CD8-positive, alpha-beta T cell (primary cell): ENCODE measurements at regions of chr1 and their contacts with region 1.

Region 1: DNA sequence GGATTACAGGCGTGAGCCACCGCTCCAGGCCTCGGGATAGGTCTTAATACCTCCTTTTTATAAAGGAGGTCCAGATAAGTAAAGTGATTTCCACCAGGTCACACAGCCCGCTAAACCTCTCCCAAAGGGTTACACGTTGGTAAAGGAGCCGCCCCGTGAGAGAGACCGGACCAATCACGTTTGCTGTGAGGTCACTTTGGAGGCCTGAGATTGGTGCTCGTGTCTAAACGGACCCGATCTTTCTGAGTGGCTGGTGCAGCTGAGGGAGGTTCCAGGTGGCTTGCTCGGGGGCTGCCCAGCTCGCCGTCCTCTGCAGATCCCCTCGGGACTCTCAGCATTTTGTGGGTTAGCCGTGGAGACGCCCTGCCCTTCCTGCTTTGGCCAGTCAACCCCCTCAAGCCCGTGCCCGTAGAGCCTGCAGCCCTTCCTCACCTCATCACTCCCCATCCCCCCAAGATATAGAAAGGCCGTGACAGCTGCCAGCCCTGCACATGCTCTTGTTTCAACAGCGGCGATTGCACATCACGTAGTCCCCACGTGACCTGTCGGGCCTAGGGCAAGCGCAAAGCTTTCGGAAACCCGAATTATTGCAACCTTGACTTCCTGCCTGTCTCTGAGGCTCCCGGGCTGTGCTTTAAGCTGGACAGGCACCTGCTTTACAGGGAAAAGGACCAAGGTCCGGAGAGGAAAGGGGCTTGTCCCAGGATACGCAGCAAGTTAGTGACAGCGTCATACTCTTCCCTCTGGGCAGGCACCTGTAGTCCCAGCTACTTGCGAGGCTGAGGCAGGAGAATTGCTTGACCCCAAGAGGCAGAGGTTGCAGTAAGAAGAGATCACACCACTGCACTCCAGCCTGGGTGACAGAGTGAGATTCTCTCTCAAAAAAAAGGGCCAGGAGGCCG is 5.0 kb upstream of the COA7 start:
- DNase-seq: peak; percentile 61 to 92 (median 78)
- ATAC-seq: peak; percentile 93
- H3K4me3 ChIP-seq: peak overlapping the region; percentile 54 to 59
- H3K4me3 Mint-ChIP-seq: peak overlapping the region; percentile 89
- H3K27ac ChIP-seq: peak overlapping the region; percentile 80 to 87
- H3K27ac Mint-ChIP-seq: peak overlapping the region; percentile 98
- H3K4me1 ChIP-seq: peaks cover 11% of the 10 kb centered on the region
- H3K4me1 Mint-ChIP-seq: peaks cover 19% of the 10 kb centered on the region
- H3K27me3 ChIP-seq: no peaks in the 10 kb centered on the region
- H3K27me3 Mint-ChIP-seq: peaks cover under 1% of the 10 kb centered on the region
- CTCF ChIP-seq: no peak

Region 2: GRCh38 chr1:52404116-52404986 is 298.8 kb before region 1 on chr1 and contains the starts of genes ORC1 and PRPF38A:
- CTCF ChIA-PET with region 1: interaction called, 3 read pairs
- POLR2A ChIA-PET with region 1: interaction called, 6 read pairs
- intact Hi-C with region 1: loop called in 1 of 2 experiments (anchors 5 kb)
- DNase-seq: peak; percentile 94 to 99 (median 98)
- ATAC-seq: peak; percentile 92
- H3K4me3 ChIP-seq: peak within 1 kb of the TSS; percentile 87 to 92
- H3K4me3 Mint-ChIP-seq: peak within 1 kb of the TSS; percentile 99
- H3K27ac ChIP-seq: peak within 1 kb of the TSS; percentile 96
- H3K27ac Mint-ChIP-seq: peak within 1 kb of the TSS; percentile 98
- H3K4me1 ChIP-seq: peaks cover 26% of the 10 kb centered on the region
- H3K4me1 Mint-ChIP-seq: peaks cover 42% of the 10 kb centered on the region
- H3K27me3 ChIP-seq: no peaks in the 10 kb centered on the region
- H3K27me3 Mint-ChIP-seq: no peaks in the 10 kb centered on the region
- CTCF ChIP-seq: no peak
- total RNA-seq, gene ORC1: 1.2 to 1.3 TPM
- total RNA-seq, gene PRPF38A: 52.2 to 62.0 TPM

Region 3: GRCh38 chr1:52691821-52692220 is 11.3 kb before region 1 on chr1:
- CTCF ChIA-PET with region 1: interaction called, 3 read pairs
- POLR2A ChIA-PET with region 1: interaction called, 3 read pairs
- intact Hi-C with region 1: loop called in 1 of 2 experiments (anchors 1 kb)
- DNase-seq: no peak
- ATAC-seq: no peak
- H3K4me3 ChIP-seq: no peak overlapping the region
- H3K4me3 Mint-ChIP-seq: no peak overlapping the region
- H3K27ac ChIP-seq: no peak overlapping the region
- H3K27ac Mint-ChIP-seq: no peak overlapping the region
- H3K4me1 ChIP-seq: no peaks in the 10 kb centered on the region
- H3K4me1 Mint-ChIP-seq: peaks cover 3% of the 10 kb centered on the region
- H3K27me3 ChIP-seq: no peaks in the 10 kb centered on the region
- H3K27me3 Mint-ChIP-seq: no peaks in the 10 kb centered on the region
- CTCF ChIP-seq: no peak

Region 4: DNA sequence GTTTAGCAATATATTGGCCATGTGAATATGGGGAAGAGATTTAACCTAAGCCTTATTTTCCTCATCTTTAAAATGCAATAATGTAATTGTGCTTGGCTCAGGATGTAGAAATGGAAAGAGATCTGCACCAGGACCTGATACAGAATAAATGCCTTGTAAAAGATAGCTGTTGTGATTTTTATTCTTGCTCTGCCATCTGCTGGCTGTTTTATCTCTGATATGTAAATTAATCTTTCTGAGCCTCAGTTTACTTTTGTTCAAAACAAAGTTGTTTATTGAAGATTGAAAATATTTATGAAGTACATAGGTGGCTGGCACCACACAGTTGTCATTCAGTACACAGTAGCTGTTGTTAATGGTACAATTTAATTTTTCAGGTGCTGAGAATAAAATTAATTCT is 45.0 kb after region 1 on chr1:
- CTCF ChIA-PET with region 1: interaction called, 4 read pairs
- POLR2A ChIA-PET with region 1: no interaction called
- intact Hi-C with region 1: loop called in 1 of 2 experiments (anchors 1 kb)
- DNase-seq: peak in 2 of 9 experiments; percentile 12 to 24
- ATAC-seq: no peak
- H3K4me3 ChIP-seq: no peak overlapping the region
- H3K4me3 Mint-ChIP-seq: no peak overlapping the region
- H3K27ac ChIP-seq: no peak overlapping the region
- H3K27ac Mint-ChIP-seq: no peak overlapping the region
- H3K4me1 ChIP-seq: no peaks in the 10 kb centered on the region
- H3K4me1 Mint-ChIP-seq: peaks cover 33% of the 10 kb centered on the region
- H3K27me3 ChIP-seq: no peaks in the 10 kb centered on the region
- H3K27me3 Mint-ChIP-seq: no peaks in the 10 kb centered on the region
- CTCF ChIP-seq: no peak

Region 5: DNA sequence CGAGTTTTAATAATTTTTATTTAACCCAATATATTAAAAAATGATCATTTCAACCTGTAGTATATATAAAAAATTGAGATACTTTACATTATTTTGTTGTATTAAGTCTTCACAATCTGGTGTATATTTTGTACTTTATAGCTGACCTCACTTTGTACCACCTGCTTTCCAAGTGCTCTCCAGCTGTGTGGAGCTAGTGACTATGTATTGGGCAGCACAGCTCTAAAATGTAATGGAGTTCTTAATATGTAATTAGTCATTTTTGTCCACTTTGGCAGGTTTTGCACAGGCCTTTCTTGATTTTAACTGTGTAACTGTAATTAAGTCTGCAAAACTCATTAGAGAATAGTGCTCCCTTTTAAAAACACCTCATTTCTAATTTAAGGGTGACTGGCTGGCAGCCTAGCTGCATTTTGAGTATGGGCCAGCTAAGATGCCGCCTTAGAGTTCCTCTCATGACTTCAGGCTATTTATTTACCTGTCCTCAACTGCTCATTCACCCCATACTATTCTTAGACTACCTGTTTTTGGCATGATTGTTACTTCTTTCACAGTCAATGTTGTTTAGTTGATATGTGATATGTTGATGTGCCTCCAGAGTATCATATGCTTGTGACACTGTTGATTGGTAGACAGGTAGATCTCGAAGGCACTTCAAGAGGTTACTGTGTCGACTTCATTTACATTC is 66.4 kb after region 1 on chr1:
- CTCF ChIA-PET with region 1: no interaction called
- POLR2A ChIA-PET with region 1: no interaction called
- intact Hi-C with region 1: no loop called
- DNase-seq: no peak
- ATAC-seq: no peak
- H3K4me3 ChIP-seq: no peak overlapping the region
- H3K4me3 Mint-ChIP-seq: no peak overlapping the region
- H3K27ac ChIP-seq: no peak overlapping the region
- H3K27ac Mint-ChIP-seq: no peak overlapping the region
- H3K4me1 ChIP-seq: no peaks in the 10 kb centered on the region
- H3K4me1 Mint-ChIP-seq: peaks cover 22% of the 10 kb centered on the region
- H3K27me3 ChIP-seq: no peaks in the 10 kb centered on the region
- H3K27me3 Mint-ChIP-seq: no peaks in the 10 kb centered on the region
- CTCF ChIP-seq: no peak

Region 6: GRCh38 chr1:52920791-52921291 is 217.7 kb after region 1 on chr1:
- CTCF ChIA-PET with region 1: interaction called, 3 read pairs
- POLR2A ChIA-PET with region 1: interaction called, 7 read pairs
- intact Hi-C with region 1: loop called in 1 of 2 experiments (anchors 2 kb)
- DNase-seq: peak in 1 of 9 experiments; percentile 33
- ATAC-seq: no peak
- H3K4me3 ChIP-seq: peak overlapping the region; percentile 18 to 60
- H3K4me3 Mint-ChIP-seq: peak overlapping the region; percentile 69
- H3K27ac ChIP-seq: peak overlapping the region; percentile 32 to 78
- H3K27ac Mint-ChIP-seq: peak overlapping the region; percentile 60
- H3K4me1 ChIP-seq: peaks cover 21% of the 10 kb centered on the region
- H3K4me1 Mint-ChIP-seq: peaks cover 31% of the 10 kb centered on the region
- H3K27me3 ChIP-seq: no peaks in the 10 kb centered on the region
- H3K27me3 Mint-ChIP-seq: no peaks in the 10 kb centered on the region
- CTCF ChIP-seq: no peak

Region 7: GRCh38 chr1:52970149-52970548 is 267.0 kb after region 1 on chr1:
- CTCF ChIA-PET with region 1: interaction called, 3 read pairs
- POLR2A ChIA-PET with region 1: no interaction called
- intact Hi-C with region 1: loop called in 1 of 2 experiments (anchors 5 kb)
- DNase-seq: peak in 2 of 9 experiments; percentile 19 to 36
- ATAC-seq: no peak
- H3K4me3 ChIP-seq: no peak overlapping the region
- H3K4me3 Mint-ChIP-seq: no peak overlapping the region
- H3K27ac ChIP-seq: no peak overlapping the region
- H3K27ac Mint-ChIP-seq: no peak overlapping the region
- H3K4me1 ChIP-seq: no peaks in the 10 kb centered on the region
- H3K4me1 Mint-ChIP-seq: no peaks in the 10 kb centered on the region
- H3K27me3 ChIP-seq: no peaks in the 10 kb centered on the region
- H3K27me3 Mint-ChIP-seq: no peaks in the 10 kb centered on the region
- CTCF ChIP-seq: no peak